ENCODE measurements at regions of chr6 and their contacts with region 1.

Region 1: DNA sequence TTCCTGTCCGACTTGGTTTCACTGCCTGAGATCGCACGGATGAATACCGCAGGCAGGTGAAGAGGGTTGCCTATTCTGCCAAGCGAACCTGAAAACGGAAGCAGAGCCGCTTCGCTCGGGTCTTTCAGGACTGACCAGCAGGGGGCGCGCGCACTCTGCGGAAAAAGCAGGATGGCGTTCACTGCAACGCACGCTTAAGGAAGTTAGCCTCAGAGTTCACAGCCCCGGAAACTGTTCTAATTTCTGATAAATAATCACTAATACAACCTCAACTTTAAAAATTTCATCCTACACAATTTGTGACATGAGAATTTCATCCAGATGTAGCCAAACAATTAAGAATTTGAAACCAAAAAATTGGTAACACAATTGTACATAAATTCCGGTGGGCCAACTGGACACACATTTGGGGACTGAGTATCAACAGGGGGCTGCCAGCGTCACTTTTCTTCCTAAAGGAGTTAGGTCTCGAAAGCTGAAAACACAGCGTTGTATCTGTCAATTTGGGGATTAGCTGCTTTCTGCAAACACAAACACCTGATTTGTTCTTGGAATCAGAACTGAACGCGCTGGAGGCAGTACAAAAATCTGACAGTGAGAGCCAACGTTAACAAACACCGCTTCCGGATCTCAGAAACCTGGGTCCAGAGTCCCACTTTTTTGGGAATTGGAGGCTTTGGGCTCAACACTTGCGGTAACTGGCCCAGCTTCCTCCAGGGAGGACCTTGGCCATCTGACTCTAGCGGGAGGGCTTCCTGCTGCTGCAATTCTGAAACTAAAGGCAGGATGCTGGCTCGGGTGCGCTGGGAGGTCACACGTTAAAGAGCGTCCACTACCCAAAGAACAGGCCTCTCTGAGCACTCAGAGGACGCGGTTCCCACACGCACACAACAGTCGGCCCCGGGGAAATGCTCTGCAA is 8.8 kb downstream of the PXDC1 start:
- DNase-seq: peak; percentile 96

Region 2: DNA sequence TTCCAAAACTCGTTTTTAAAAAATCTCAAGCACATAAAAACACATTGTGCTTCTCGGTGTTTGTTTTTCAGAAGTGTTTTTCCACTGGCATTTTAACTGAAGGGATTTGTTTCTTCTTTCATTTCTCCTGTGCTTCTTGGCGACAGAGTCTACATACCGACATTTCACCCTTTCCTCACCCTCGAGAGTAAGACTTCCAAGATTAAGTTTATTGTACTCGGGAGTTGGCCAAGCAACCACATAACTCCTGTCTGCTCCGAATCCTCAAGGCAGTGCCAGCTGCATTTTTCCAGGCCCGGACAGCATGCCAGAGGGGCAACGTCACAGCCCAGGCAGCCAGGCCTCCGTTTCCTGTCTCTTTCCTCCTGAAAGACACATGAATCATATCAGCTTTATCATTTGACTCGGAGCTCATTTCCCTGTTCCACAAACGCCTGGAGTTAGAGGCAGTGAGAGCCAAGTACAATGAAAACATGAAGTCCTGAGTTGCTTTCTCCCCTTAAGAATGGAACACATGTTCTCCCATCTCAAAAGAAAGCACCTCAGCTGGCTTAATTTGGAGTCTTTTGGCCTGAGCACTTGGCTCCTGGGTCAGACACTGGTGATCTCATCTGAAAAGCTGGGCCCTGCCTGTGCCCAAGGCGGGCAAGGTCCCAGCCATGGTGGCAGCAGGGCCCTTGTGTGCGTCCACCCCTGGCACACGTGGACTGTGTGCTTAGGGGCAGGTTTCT is 83.3 kb after region 1 on chr6:
- intact Hi-C with region 1: no loop called
- DNase-seq: peak; percentile 97

Region 3: GRCh38 chr6:3887150-3887700 is 144.5 kb after region 1 on chr6:
- intact Hi-C with region 1: loop called in 1 of 2 experiments (anchors 5 kb)
- DNase-seq: no peak

Region 4: DNA sequence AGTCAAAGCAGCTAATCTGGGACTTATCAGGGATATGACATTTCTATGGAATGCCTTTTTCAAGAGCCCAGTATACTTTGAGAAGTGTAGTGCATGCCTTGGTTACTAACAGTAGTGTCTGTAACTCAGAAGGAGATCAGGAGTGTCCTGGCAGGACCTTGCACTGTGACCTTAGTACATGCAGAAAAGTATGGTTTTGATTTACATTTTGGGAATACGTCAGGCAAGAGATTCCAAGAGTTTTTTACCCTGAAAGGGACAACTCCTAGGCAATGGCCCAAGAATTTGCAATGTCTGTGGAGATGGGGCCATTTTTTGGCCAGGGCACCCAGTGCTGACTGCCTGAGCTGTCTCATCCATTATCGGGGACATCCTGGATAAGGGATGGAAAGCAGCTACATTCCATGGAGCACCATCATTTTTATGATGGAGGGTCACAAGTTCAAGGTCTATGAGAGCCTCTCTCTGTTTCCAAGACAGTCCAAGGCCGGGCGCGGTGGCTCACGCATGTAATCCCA is 186.7 kb after region 1 on chr6:
- intact Hi-C with region 1: loop called in 1 of 2 experiments (anchors 2 kb)
- DNase-seq: peak; percentile 88

Region 5: GRCh38 chr6:3990692-3991501 is 248.2 kb after region 1 on chr6:
- intact Hi-C with region 1: loop called (anchors 5 kb)
- DNase-seq: peak; percentile 94

Measured in posterior vena cava (tissue), 2 donors.